Activated CD4-positive, alpha-beta T cell treated with anti-CD3 and anti-CD28 coated beads, Interleukin-2, amount 10 ng/mL, durations not matched to agents 7 days and 5 days (primary cell): ENCODE measurements at regions of chrX and their contacts with region 1.

Region 1: GRCh38 chrX:65723706-65724105 is 56.3 kb downstream of the MSN start:
- DNase-seq: peak; percentile 43
- H3K4me3 Mint-ChIP-seq: peak overlapping the region; percentile 47
- H3K27ac Mint-ChIP-seq: peak overlapping the region; percentile 86
- H3K4me1 Mint-ChIP-seq: peaks cover 90% of the 10 kb centered on the region
- H3K27me3 Mint-ChIP-seq: no peaks in the 10 kb centered on the region

Region 2: GRCh38 chrX:65697915-65698796 is 25.6 kb before region 1 on chrX:
- CTCF ChIA-PET with region 1: interaction called, 18 read pairs
- POLR2A ChIA-PET with region 1: no interaction called
- DNase-seq: peak; percentile 79
- H3K4me3 Mint-ChIP-seq: peak overlapping the region; percentile 73
- H3K27ac Mint-ChIP-seq: peak overlapping the region; percentile 90
- H3K4me1 Mint-ChIP-seq: peaks cover 87% of the 10 kb centered on the region
- H3K27me3 Mint-ChIP-seq: no peaks in the 10 kb centered on the region

Region 3: GRCh38 chrX:65706041-65706828 is 17.5 kb before region 1 on chrX:
- CTCF ChIA-PET with region 1: interaction called, 15 read pairs
- POLR2A ChIA-PET with region 1: no interaction called
- DNase-seq: no peak
- H3K4me3 Mint-ChIP-seq: no peak overlapping the region
- H3K27ac Mint-ChIP-seq: peak overlapping the region; percentile 85
- H3K4me1 Mint-ChIP-seq: peaks cover 64% of the 10 kb centered on the region
- H3K27me3 Mint-ChIP-seq: no peaks in the 10 kb centered on the region